Activated CD8-positive, alpha-beta T cell treated with anti-CD3 and anti-CD28 coated beads for 36 hours (primary cell): ENCODE measurements at regions of chr14 and their contacts with region 1.

Region 1: GRCh38 chr14:94001501-94002396 is 4.6 kb downstream of the CCDC197 start:
- DNase-seq: peak; percentile 64
- ATAC-seq: peak; percentile 81
- H3K4me3 Mint-ChIP-seq: no peak overlapping the region
- H3K27ac Mint-ChIP-seq: peak overlapping the region; percentile 50
- H3K4me1 Mint-ChIP-seq: peaks cover 20% of the 10 kb centered on the region
- H3K27me3 Mint-ChIP-seq: peaks cover 12% of the 10 kb centered on the region
- CTCF ChIP-seq: peak; percentile 96

Region 2: GRCh38 chr14:93959239-93960107 is 42.3 kb before region 1 on chr14:
- CTCF ChIA-PET with region 1: interaction called, 16 read pairs
- POLR2A ChIA-PET with region 1: interaction called, 19 read pairs
- intact Hi-C with region 1: no loop called
- DNase-seq: peak; percentile 98
- ATAC-seq: peak; percentile 69
- H3K4me3 Mint-ChIP-seq: peak overlapping the region; percentile 66
- H3K27ac Mint-ChIP-seq: peak overlapping the region; percentile 99
- H3K4me1 Mint-ChIP-seq: peaks cover 93% of the 10 kb centered on the region
- H3K27me3 Mint-ChIP-seq: no peaks in the 10 kb centered on the region
- CTCF ChIP-seq: no peak

Region 3: GRCh38 chr14:93970549-93970946 is 31.2 kb before region 1 on chr14:
- CTCF ChIA-PET with region 1: interaction called, 57 read pairs
- POLR2A ChIA-PET with region 1: interaction called, 3 read pairs
- intact Hi-C with region 1: no loop called
- DNase-seq: peak; percentile 80
- ATAC-seq: peak; percentile 78
- H3K4me3 Mint-ChIP-seq: peak overlapping the region; percentile 76
- H3K27ac Mint-ChIP-seq: peak overlapping the region; percentile 95
- H3K4me1 Mint-ChIP-seq: peaks cover 67% of the 10 kb centered on the region
- H3K27me3 Mint-ChIP-seq: no peaks in the 10 kb centered on the region
- CTCF ChIP-seq: peak; percentile 80

Region 4: DNA sequence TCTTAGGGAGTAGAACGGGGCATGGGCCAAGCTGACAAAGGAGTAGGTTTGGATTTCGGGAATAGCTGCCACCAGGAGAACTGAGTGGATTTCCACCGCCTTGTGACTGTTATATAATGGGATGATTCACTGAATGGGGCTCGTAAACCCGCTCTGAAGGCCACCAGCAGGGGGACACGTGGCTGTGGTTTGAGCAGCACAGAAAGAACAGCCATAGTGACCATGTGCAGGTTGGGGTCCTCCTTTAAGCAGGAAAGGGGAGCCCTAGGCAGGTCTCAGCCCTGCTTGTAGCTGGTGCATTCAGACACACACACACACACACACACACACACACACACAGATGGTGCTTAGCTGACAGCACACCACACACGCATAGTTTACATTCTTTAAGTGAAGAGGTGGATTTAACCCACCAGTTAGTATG is 16.8 kb before region 1 on chr14:
- CTCF ChIA-PET with region 1: interaction called, 17 read pairs
- POLR2A ChIA-PET with region 1: interaction called, 6 read pairs
- intact Hi-C with region 1: no loop called
- DNase-seq: no peak
- ATAC-seq: no peak
- H3K4me3 Mint-ChIP-seq: no peak overlapping the region
- H3K27ac Mint-ChIP-seq: no peak overlapping the region
- H3K4me1 Mint-ChIP-seq: peaks cover 15% of the 10 kb centered on the region
- H3K27me3 Mint-ChIP-seq: peaks cover 2% of the 10 kb centered on the region
- CTCF ChIP-seq: no peak

Region 5: GRCh38 chr14:94021001-94021400 is 19.3 kb after region 1 on chr14:
- CTCF ChIA-PET with region 1: interaction called, 12 read pairs
- POLR2A ChIA-PET with region 1: no interaction called
- intact Hi-C with region 1: no loop called
- DNase-seq: no peak
- ATAC-seq: no peak
- H3K4me3 Mint-ChIP-seq: no peak overlapping the region
- H3K27ac Mint-ChIP-seq: no peak overlapping the region
- H3K4me1 Mint-ChIP-seq: peaks cover 32% of the 10 kb centered on the region
- H3K27me3 Mint-ChIP-seq: peaks cover 3% of the 10 kb centered on the region
- CTCF ChIP-seq: no peak

Region 6: DNA sequence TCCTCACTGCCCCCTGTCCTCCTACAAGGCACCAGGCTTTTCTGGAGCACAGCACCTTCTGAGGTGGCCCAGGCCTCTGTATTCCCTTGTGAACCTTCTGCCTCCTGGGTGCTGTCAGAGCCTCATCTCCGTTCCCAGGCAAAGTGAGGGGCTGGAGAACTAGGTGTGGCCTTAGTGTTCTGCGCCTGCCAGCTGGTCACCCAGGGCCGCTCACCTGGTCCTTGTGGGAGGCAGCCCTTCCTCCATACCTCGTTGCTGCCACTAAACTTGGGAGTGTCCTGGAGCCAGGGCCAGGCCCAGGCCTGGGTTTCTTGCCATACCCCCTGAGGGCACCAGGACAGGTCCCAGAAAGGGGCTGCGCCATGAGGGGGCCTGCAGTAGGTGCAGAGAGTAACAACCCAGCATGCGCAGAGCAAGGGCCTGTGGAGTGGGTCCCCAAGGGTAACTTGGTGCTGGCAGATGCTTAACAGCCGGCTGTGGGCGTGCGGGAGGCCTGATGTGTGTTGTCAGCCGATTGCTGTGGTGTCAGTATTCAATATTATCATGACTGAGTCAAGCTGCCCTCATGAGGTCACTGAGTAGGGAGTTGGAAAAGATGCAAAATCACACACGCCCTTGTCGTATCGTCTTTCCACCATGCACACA is 41.5 kb after region 1 on chr14:
- CTCF ChIA-PET with region 1: no interaction called
- POLR2A ChIA-PET with region 1: no interaction called
- intact Hi-C with region 1: no loop called
- DNase-seq: no peak
- ATAC-seq: no peak
- H3K4me3 Mint-ChIP-seq: no peak overlapping the region
- H3K27ac Mint-ChIP-seq: no peak overlapping the region
- H3K4me1 Mint-ChIP-seq: no peaks in the 10 kb centered on the region
- H3K27me3 Mint-ChIP-seq: no peaks in the 10 kb centered on the region
- CTCF ChIP-seq: no peak

Region 7: DNA sequence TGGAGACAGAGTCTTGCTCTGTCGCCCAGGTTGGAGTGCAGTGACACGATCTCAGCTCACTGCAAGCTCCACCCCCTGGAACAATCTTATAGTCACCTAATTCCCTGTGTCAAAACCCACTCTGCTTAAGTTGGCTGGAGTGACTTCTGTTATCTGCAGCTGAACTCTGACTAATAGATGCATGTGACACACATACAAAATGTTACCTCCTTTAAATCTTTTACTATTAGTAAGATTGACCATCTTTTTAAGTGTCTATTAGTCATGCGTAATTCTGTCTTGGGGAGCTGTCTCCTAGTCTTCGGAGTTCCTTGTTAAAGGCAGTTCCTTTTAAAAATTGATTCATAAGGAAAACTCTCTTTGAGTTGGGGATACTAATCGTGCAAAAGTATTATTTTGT is 86.8 kb after region 1 on chr14:
- CTCF ChIA-PET with region 1: no interaction called
- POLR2A ChIA-PET with region 1: no interaction called
- intact Hi-C with region 1: no loop called
- DNase-seq: no peak
- ATAC-seq: no peak
- H3K4me3 Mint-ChIP-seq: no peak overlapping the region
- H3K27ac Mint-ChIP-seq: no peak overlapping the region
- H3K4me1 Mint-ChIP-seq: no peaks in the 10 kb centered on the region
- H3K27me3 Mint-ChIP-seq: no peaks in the 10 kb centered on the region
- CTCF ChIP-seq: no peak